K562 (cell line): ENCODE measurements at regions of chr17 and their contacts with region 1.

Region 1: GRCh38 chr17:27299384-27300049 is 5.6 kb downstream of the WSB1 start:
- DNase-seq: no peak
- ATAC-seq: no peak
- H3K4me3 ChIP-seq: no peak overlapping the region
- H3K27ac ChIP-seq: no peak overlapping the region
- H3K4me1 ChIP-seq: peaks cover 4 to 7% of the 10 kb centered on the region in 2 experiments; a peak in 4 of 5 replicates
- H3K27me3 ChIP-seq: no peaks in the 10 kb centered on the region
- CTCF ChIP-seq: no peak
- EP300 ChIP-seq: no peak
- POLR2A ChIP-seq: no peak
- RAD21 ChIP-seq: no peak

Region 2: DNA sequence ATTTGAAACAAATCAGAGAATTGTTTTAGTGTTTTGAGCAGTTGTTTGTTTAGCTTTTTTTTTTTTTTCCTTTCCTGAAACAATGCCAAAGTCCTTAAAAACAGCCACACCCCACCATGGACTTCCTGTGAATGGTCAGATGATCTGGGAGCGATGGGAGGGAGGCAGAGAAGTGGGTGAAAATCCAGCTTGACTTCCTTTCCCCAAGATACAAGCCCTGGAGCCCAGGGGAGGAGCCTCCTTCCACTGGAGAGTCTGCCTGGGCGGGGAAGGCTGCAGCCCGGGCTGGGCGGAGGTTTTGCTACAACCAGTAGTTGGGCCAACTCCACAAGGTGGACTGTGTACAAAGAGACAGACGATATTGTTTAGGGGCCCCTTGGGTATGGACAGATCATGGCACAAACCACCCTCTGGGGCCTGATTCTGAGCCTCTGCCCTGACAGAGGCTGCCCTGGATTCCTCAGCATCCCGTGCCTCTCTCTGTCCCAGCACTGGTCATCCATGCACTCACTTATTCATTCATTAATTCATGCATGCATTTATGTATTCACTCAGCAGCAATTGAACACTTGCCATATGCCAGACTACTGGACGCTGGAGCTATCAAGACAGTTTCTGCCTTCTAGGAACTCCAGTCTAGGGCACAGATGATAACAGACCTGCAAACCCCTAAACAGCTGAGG is 24.1 kb after region 1 on chr17:
- CTCF ChIA-PET with region 1: no interaction called
- POLR2A ChIA-PET with region 1: interaction called, 88 read pairs
- in situ Hi-C with region 1: no loop called
- intact Hi-C with region 1: no loop called
- DNase-seq: peak; percentile 46 to 77 (median 56)
- ATAC-seq: peak; percentile 94
- H3K4me3 ChIP-seq: no peak overlapping the region
- H3K27ac ChIP-seq: no peak overlapping the region
- H3K4me1 ChIP-seq: peaks cover 7 to 13% of the 10 kb centered on the region in 2 experiments; a peak in 4 of 5 replicates
- H3K27me3 ChIP-seq: no peaks in the 10 kb centered on the region
- CTCF ChIP-seq: no peak
- EP300 ChIP-seq: 0 out of 2 replicates have a peak, but pooled peaks have one; percentile 5
- POLR2A ChIP-seq: no peak
- RAD21 ChIP-seq: no peak

Region 3: GRCh38 chr17:27494192-27495091 is 194.9 kb after region 1 on chr17:
- CTCF ChIA-PET with region 1: no interaction called
- POLR2A ChIA-PET with region 1: no interaction called
- in situ Hi-C with region 1: no loop called
- intact Hi-C with region 1: no loop called
- DNase-seq: no peak
- ATAC-seq: no peak
- H3K4me3 ChIP-seq: no peak overlapping the region
- H3K27ac ChIP-seq: no peak overlapping the region
- H3K4me1 ChIP-seq: peaks cover 35 to 61% of the 10 kb centered on the region in 2 experiments
- H3K27me3 ChIP-seq: no peaks in the 10 kb centered on the region
- CTCF ChIP-seq: peak; percentile 24 to 43 (median 40); a peak in 2 of 6 replicates
- EP300 ChIP-seq: no peak
- POLR2A ChIP-seq: no peak
- RAD21 ChIP-seq: peak in 1 of 2 experiments; percentile 50; a peak in 2 of 4 replicates